ENCODE measurements at regions of chr19 and their contacts with region 1.

Region 1: DNA sequence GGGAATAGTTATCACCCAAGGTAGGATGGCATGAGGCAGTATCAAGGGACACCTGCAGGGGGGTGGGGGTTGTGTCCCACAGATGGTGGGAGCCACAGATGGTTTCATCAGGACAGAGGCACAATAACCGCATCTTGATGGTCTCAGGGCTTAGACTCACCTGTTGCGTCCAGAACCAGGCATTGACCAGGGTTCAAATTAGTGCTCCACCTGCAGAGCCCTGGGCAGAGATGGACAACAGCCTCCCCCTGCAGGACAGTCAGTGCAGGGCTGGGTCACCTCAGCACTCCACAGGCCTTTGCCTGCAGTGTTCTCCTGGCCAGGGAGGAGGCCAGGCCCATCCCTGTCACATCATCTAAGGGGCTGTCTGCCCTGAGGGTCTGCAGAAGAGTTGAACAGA is 14.5 kb upstream of the CEACAM1 start:
- DNase-seq: no peak
- H3K4me3 ChIP-seq: no peak overlapping the region
- H3K27ac ChIP-seq: no peak overlapping the region
- H3K4me1 ChIP-seq: no peaks in the 10 kb centered on the region
- H3K27me3 ChIP-seq: no peaks in the 10 kb centered on the region
- CTCF ChIP-seq: peak; percentile 35; the same call in 1 of the 2 replicates

Region 2: GRCh38 chr19:42816894-42817293 is 274.1 kb after region 1 on chr19:
- CTCF ChIA-PET with region 1: interaction called, 13 read pairs
- POLR2A ChIA-PET with region 1: no interaction called
- intact Hi-C with region 1: no loop called
- DNase-seq: no peak
- H3K4me3 ChIP-seq: no peak overlapping the region
- H3K27ac ChIP-seq: no peak overlapping the region
- H3K4me1 ChIP-seq: no peaks in the 10 kb centered on the region
- H3K27me3 ChIP-seq: no peaks in the 10 kb centered on the region
- CTCF ChIP-seq: no peak

Region 3: DNA sequence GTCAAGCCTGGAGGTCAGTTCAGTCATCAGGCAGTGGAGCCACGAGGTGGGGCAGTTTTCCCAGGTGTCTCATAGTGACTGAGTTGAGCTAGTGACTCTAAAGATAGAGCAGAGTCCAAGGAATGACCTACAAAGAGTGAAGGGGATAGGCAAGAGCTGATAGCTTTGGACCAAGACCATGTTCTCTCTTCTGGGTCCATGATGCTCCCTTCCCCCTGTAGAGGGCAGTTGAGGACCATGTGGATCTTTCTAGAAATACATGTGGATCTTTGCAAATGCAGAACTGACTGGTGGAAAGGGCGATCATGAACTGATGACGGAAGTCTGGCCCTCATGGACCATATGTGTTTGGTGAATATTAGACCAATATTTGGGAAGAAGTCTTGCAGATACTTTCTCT is 329.8 kb after region 1 on chr19:
- CTCF ChIA-PET with region 1: no interaction called
- POLR2A ChIA-PET with region 1: no interaction called
- intact Hi-C with region 1: no loop called
- DNase-seq: no peak
- H3K4me3 ChIP-seq: no peak overlapping the region
- H3K27ac ChIP-seq: no peak overlapping the region
- H3K4me1 ChIP-seq: peaks cover 32% of the 10 kb centered on the region
- H3K27me3 ChIP-seq: no peaks in the 10 kb centered on the region
- CTCF ChIP-seq: no peak